ENCODE measurements at regions of chr2 and their contacts with region 1.

Region 1: GRCh38 chr2:180017784-180018183 is 10.7 kb upstream of the CWC22 start:
- DNase-seq: peak; percentile 86
- H3K4me3 Mint-ChIP-seq: no peak overlapping the region
- H3K27ac Mint-ChIP-seq: peak overlapping the region; percentile 10
- H3K4me1 Mint-ChIP-seq: peaks cover 27% of the 10 kb centered on the region
- H3K27me3 Mint-ChIP-seq: no peaks in the 10 kb centered on the region
- CTCF ChIP-seq: no peak

Region 2: GRCh38 chr2:180006781-180007579 is 10.8 kb before region 1 on chr2 and contains the start of gene CWC22:
- CTCF ChIA-PET with region 1: interaction called, 8 read pairs
- POLR2A ChIA-PET with region 1: interaction called, 12 read pairs
- intact Hi-C with region 1: no loop called
- DNase-seq: peak; percentile 92
- H3K4me3 Mint-ChIP-seq: peak within 1 kb of the TSS; percentile 93
- H3K27ac Mint-ChIP-seq: peak within 1 kb of the TSS; percentile 100
- H3K4me1 Mint-ChIP-seq: peaks cover 28% of the 10 kb centered on the region
- H3K27me3 Mint-ChIP-seq: no peaks in the 10 kb centered on the region
- CTCF ChIP-seq: no peak
- total RNA-seq, gene CWC22: 34.0 and 38.8 TPM in 2 replicates

Region 3: GRCh38 chr2:180040146-180040925 is 22.6 kb after region 1 on chr2:
- CTCF ChIA-PET with region 1: interaction called, 7 read pairs
- POLR2A ChIA-PET with region 1: interaction called, 14 read pairs
- intact Hi-C with region 1: loop called (anchors 2 kb)
- DNase-seq: peak; percentile 92
- H3K4me3 Mint-ChIP-seq: no peak overlapping the region
- H3K27ac Mint-ChIP-seq: no peak overlapping the region
- H3K4me1 Mint-ChIP-seq: peaks cover 16% of the 10 kb centered on the region
- H3K27me3 Mint-ChIP-seq: no peaks in the 10 kb centered on the region
- CTCF ChIP-seq: no peak

Region 4: DNA sequence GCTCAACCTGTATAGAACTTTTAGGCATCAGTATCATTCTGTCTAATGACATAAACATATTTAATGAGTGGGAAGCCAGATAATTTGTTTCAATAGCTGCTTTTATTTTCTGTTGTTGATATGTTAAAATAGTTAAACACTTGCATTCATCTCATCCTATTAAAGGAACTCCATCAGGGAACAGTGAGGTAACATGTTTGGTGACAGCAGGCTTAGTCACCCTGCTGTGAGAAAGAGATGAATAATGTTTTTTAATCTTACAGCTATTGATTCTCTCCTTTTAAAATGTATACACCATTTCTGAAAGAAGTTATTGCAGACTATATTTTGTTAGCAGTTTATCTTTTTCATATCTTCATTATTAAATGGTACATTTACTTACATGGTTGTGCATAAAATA is 112.6 kb after region 1 on chr2:
- CTCF ChIA-PET with region 1: no interaction called
- POLR2A ChIA-PET with region 1: no interaction called
- intact Hi-C with region 1: no loop called
- DNase-seq: peak; percentile 47
- H3K4me3 Mint-ChIP-seq: no peak overlapping the region
- H3K27ac Mint-ChIP-seq: peak overlapping the region; percentile 39
- H3K4me1 Mint-ChIP-seq: peaks cover 10% of the 10 kb centered on the region
- H3K27me3 Mint-ChIP-seq: no peaks in the 10 kb centered on the region
- CTCF ChIP-seq: no peak

Measured in MCF 10A (cell line).